HCT116 (cell line): ENCODE measurements at regions of chr1 and their contacts with region 1.

Region 1: GRCh38 chr1:167755654-167756053 is 33.9 kb downstream of the MPZL1 start:
- DNase-seq: no peak
- ATAC-seq: no peak
- H3K4me3 ChIP-seq: no peak overlapping the region
- H3K27ac ChIP-seq: no peak overlapping the region
- H3K4me1 ChIP-seq: peaks cover 4 to 15% of the 10 kb centered on the region in 2 experiments; a peak in 3 of 4 replicates
- H3K27me3 ChIP-seq: no peaks in the 10 kb centered on the region
- CTCF ChIP-seq: 0 out of 6 replicates have a peak, but pooled peaks of 1 of the 3 experiments have one; percentile 11
- POLR2A ChIP-seq: no peak
- RAD21 ChIP-seq: no peak

Region 2: DNA sequence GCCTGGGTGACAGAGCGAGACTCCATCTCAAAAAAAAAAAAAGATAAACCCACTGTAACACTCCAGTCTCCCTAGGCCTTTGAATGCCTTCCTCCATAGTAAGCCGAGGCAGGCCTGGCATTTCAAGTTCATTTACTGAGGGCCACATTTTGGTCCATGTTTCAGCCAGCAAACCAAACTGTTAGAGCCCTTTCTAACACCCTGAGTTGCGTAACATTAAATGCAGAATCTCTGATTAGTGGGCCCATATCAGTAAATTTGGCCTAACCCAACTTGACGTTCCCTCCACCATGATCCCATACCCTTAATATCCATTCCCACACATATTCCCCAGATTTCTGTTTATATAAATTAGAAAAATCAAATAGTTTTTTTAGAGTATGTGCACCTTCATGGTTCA is 21.4 kb before region 1 on chr1:
- CTCF ChIA-PET with region 1: no interaction called
- POLR2A ChIA-PET with region 1: no interaction called
- RAD21 ChIA-PET with region 1: no interaction called
- intact Hi-C with region 1: loop called (anchors 2 kb)
- DNase-seq: no peak
- ATAC-seq: no peak
- H3K4me3 ChIP-seq: no peak overlapping the region
- H3K27ac ChIP-seq: no peak overlapping the region
- H3K4me1 ChIP-seq: no peaks in the 10 kb centered on the region
- H3K27me3 ChIP-seq: no peaks in the 10 kb centered on the region
- CTCF ChIP-seq: no peak
- POLR2A ChIP-seq: no peak
- RAD21 ChIP-seq: no peak